A549 (cell line): ENCODE measurements at regions of chr2 and their contacts with region 1.

Region 1: GRCh38 chr2:217785544-217786045 is 217.2 kb downstream of the TNS1 start:
- DNase-seq: peak; percentile 63 to 72
- ATAC-seq: peak; percentile 85 to 90
- H3K4me3 ChIP-seq: no peak overlapping the region
- H3K27ac ChIP-seq: no peak overlapping the region
- H3K4me1 ChIP-seq: peaks cover 3% of the 10 kb centered on the region; the same call in 1 of the 3 replicates
- CTCF ChIP-seq: peak; percentile 95
- EP300 ChIP-seq: no peak
- POLR2A ChIP-seq: no peak
- RAD21 ChIP-seq: peak; percentile 95 to 97

Region 2: GRCh38 chr2:217798743-217799562 is 13.4 kb after region 1 on chr2:
- CTCF ChIA-PET with region 1: interaction called, 86 read pairs
- POLR2A ChIA-PET with region 1: no interaction called
- DNase-seq: no peak
- ATAC-seq: no peak
- H3K4me3 ChIP-seq: no peak overlapping the region
- H3K27ac ChIP-seq: no peak overlapping the region
- H3K4me1 ChIP-seq: 0 out of 3 replicates have a peak, but pooled peaks cover 3% of the 10 kb centered on the region
- CTCF ChIP-seq: no peak
- EP300 ChIP-seq: no peak
- POLR2A ChIP-seq: no peak
- RAD21 ChIP-seq: no peak

Region 3: DNA sequence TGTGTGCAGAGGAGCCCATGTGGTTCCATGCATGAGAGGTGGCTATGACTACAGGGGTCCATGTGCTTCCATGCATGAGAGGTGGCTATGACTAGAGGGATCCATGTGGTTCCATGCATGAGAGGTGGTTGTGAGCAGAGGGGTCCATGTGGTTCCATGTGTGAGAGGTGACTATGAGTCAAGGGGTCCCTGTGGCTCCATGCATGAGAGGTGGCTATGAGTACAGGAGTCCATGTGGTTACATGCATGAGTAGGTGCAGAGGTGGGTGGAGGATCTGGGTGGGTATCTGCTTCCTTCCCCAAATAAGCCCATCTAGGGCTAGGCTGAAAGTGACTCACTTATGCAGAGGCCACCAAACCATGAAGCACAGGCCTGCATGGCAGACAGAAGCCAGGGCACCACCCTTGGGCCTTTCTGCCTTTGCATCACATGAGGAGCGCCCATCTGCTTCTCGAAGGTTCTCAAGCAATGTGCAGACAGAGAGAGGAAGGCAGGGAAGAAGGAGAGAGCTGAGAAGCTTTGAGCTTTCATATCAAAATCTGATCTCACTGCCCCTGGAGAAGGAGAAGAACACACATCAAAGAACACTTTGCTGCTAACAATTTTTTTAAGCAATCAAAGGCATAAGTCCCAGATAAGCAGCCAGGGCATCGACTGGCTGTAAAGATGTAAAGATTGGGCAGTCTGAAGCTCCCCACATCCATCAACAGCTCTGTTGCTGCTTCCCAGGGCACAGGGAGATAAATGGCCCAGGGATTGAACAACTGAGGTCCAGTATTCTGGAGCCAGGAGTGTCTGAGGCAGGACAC is 79.6 kb after region 1 on chr2:
- CTCF ChIA-PET with region 1: interaction called, 13 read pairs
- POLR2A ChIA-PET with region 1: no interaction called
- DNase-seq: no peak
- ATAC-seq: no peak
- H3K4me3 ChIP-seq: no peak overlapping the region
- H3K27ac ChIP-seq: no peak overlapping the region
- H3K4me1 ChIP-seq: no peaks in the 10 kb centered on the region
- CTCF ChIP-seq: no peak
- EP300 ChIP-seq: no peak
- POLR2A ChIP-seq: no peak
- RAD21 ChIP-seq: no peak

Region 4: GRCh38 chr2:217893440-217893839 is 107.8 kb after region 1 on chr2:
- CTCF ChIA-PET with region 1: interaction called, 112 read pairs
- POLR2A ChIA-PET with region 1: no interaction called
- DNase-seq: no peak
- ATAC-seq: no peak
- H3K4me3 ChIP-seq: no peak overlapping the region
- H3K27ac ChIP-seq: no peak overlapping the region
- H3K4me1 ChIP-seq: peaks cover 7% of the 10 kb centered on the region; the same call in 2 of the 3 replicates
- CTCF ChIP-seq: no peak
- EP300 ChIP-seq: no peak
- POLR2A ChIP-seq: no peak
- RAD21 ChIP-seq: no peak

Region 5: DNA sequence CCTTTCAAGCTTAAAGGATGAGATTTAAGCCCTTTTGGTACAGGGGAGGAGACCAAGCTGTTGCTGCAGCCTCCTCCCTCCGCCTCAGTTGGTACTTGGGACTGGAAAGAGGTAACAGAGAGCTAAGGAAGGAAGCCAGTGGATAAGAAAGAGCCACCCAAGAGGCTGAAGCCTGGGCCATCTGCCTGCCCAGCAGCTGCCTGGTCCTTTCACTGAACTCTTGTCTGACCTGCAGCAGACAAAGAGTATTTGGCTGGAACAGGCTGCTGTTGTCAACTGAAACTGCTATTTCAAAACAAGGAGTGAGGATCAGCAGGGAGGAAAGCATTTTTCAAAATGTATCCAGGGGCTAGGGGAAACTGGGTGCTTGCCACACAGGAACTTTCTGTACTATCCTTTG is 186.9 kb after region 1 on chr2:
- CTCF ChIA-PET with region 1: interaction called, 13 read pairs
- POLR2A ChIA-PET with region 1: no interaction called
- DNase-seq: no peak
- ATAC-seq: no peak
- H3K4me3 ChIP-seq: no peak overlapping the region
- H3K27ac ChIP-seq: no peak overlapping the region
- H3K4me1 ChIP-seq: no peaks in the 10 kb centered on the region
- CTCF ChIP-seq: no peak
- EP300 ChIP-seq: no peak
- POLR2A ChIP-seq: no peak
- RAD21 ChIP-seq: no peak

Region 6: GRCh38 chr2:218010140-218010983 is 224.8 kb after region 1 on chr2:
- CTCF ChIA-PET with region 1: interaction called, 18 read pairs
- POLR2A ChIA-PET with region 1: no interaction called
- DNase-seq: peak; percentile 25 to 90
- ATAC-seq: peak; percentile 84 to 91
- H3K4me3 ChIP-seq: peak overlapping the region; percentile 61
- H3K27ac ChIP-seq: peak overlapping the region; percentile 79 to 91
- H3K4me1 ChIP-seq: peaks cover 33% of the 10 kb centered on the region
- CTCF ChIP-seq: peak; percentile 58
- EP300 ChIP-seq: no peak
- POLR2A ChIP-seq: no peak
- RAD21 ChIP-seq: peak in 1 of 2 experiments; percentile 65; a peak in 3 of 5 replicates

Region 7: GRCh38 chr2:218074031-218074430 is 288.4 kb after region 1 on chr2:
- CTCF ChIA-PET with region 1: interaction called, 177 read pairs
- POLR2A ChIA-PET with region 1: no interaction called
- DNase-seq: peak; percentile 26 to 32
- ATAC-seq: peak in 1 of 2 experiments; percentile 84; a peak in 3 of 6 replicates
- H3K4me3 ChIP-seq: no peak overlapping the region
- H3K27ac ChIP-seq: no peak overlapping the region
- H3K4me1 ChIP-seq: no peaks in the 10 kb centered on the region
- CTCF ChIP-seq: peak; percentile 42
- EP300 ChIP-seq: no peak
- POLR2A ChIP-seq: no peak
- RAD21 ChIP-seq: no peak